CD4-positive, alpha-beta memory T cell (primary cell): ENCODE measurements at regions of chr19 and their contacts with region 1.

Region 1: DNA sequence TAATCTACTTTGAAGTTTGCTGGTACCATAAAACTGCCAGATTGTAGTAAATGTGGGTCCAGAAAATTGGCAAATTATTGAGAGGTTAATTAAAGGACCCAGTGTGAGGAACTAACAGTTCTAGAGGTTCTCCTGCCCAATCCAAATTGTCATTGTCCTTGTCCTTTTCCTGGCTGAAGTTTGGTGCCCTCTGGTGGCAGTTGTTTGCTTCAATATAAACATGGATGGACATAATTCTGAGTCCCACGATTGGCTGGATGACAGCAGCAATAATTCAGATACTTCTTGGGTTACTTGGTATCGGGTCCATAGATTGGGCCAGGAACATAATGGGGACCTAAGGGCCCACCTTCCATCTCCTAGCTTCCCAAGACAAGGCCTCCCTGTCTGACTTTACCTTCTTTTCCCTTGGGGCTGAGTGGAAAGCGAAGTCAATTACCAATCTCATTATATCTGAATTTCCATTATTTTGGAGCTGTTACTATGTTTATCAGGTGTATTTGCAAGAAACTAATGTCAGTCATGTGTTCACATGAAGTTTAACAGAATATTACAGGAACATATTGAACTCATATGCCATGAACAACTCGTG is 33.8 kb upstream of the GARRE1 start:
- DNase-seq: peak; percentile 39 to 57 (median 52)
- H3K4me3 ChIP-seq: no peak overlapping the region
- H3K4me3 Mint-ChIP-seq: peak overlapping the region in 1 of 8 donors; percentile 44
- H3K27ac ChIP-seq: no peak overlapping the region
- H3K27ac Mint-ChIP-seq: peak overlapping the region in 6 of 7 donors; percentile 0 to 83 (median 39)
- H3K4me1 ChIP-seq: peaks cover 42% of the 10 kb centered on the region
- H3K4me1 Mint-ChIP-seq: peaks cover 45 to 68% (median 53%) of the 10 kb centered on the region in 4 donors
- H3K27me3 ChIP-seq: no peaks in the 10 kb centered on the region
- H3K27me3 Mint-ChIP-seq: no peaks in the 10 kb centered on the region

Region 2: DNA sequence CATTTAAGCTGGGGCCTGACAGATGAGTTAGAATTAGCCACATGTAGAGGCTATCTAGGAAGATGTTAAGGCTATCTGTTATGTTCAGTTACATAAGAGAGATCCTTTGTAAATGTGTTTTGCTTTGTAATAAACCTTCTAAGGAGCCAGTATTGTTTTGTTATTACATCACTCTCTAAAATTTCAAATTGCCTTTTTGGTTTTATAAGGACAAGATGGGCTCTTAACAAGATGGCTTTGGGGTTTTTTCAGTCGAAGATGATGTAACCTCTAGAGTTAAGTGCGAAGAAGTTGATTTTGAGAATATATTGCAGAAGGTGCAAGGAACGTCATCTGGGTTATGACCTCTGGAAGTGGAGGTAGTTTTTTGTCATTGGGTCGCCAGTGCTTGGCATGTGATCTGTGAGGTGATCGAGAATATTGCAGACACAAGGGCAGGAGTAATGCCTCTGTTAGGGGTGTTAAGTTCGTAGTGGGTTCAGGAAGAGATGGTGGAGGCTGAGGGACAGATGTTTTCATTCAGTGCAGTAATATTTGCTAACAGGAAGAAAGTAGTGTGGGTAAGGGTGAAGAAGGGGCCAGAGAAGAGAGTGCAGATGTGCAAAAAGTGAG is 35.6 kb before region 1 on chr19:
- CTCF ChIA-PET with region 1: interaction called, 4 read pairs
- POLR2A ChIA-PET with region 1: no interaction called
- intact Hi-C with region 1: loop called (anchors 5 kb)
- DNase-seq: peak in 1 of 5 donors; percentile 37
- H3K4me3 ChIP-seq: no peak overlapping the region
- H3K4me3 Mint-ChIP-seq: peak overlapping the region in 7 of 8 donors; percentile 18 to 82 (median 62)
- H3K27ac ChIP-seq: no peak overlapping the region
- H3K27ac Mint-ChIP-seq: peak overlapping the region; percentile 7 to 89 (median 57)
- H3K4me1 ChIP-seq: peaks cover 96% of the 10 kb centered on the region
- H3K4me1 Mint-ChIP-seq: peaks cover 63 to 96% (median 81%) of the 10 kb centered on the region in 4 donors
- H3K27me3 ChIP-seq: no peaks in the 10 kb centered on the region
- H3K27me3 Mint-ChIP-seq: no peaks in the 10 kb centered on the region

Region 3: GRCh38 chr19:34209726-34210125 is 10.8 kb before region 1 on chr19:
- CTCF ChIA-PET with region 1: interaction called, 12 read pairs
- POLR2A ChIA-PET with region 1: no interaction called
- intact Hi-C with region 1: no loop called
- DNase-seq: no peak
- H3K4me3 ChIP-seq: no peak overlapping the region
- H3K4me3 Mint-ChIP-seq: no peak overlapping the region
- H3K27ac ChIP-seq: no peak overlapping the region
- H3K27ac Mint-ChIP-seq: peak overlapping the region in 3 of 7 donors; percentile 42 to 57 (median 48)
- H3K4me1 ChIP-seq: no peaks in the 10 kb centered on the region
- H3K4me1 Mint-ChIP-seq: peaks cover 3 to 8% (median 5%) of the 10 kb centered on the region in 4 donors
- H3K27me3 ChIP-seq: no peaks in the 10 kb centered on the region
- H3K27me3 Mint-ChIP-seq: no peaks in the 10 kb centered on the region

Region 4: GRCh38 chr19:34253699-34254551 is 33.4 kb after region 1 on chr19:
- CTCF ChIA-PET with region 1: interaction called, 3 read pairs
- POLR2A ChIA-PET with region 1: no interaction called
- intact Hi-C with region 1: loop called (anchors 5 kb)
- DNase-seq: peak in 3 of 5 donors; percentile 80 to 85 (median 82)
- H3K4me3 ChIP-seq: peak overlapping the region; percentile 67 to 75
- H3K4me3 Mint-ChIP-seq: peak overlapping the region; percentile 96 to 100 (median 98)
- H3K27ac ChIP-seq: peak overlapping the region; percentile 90
- H3K27ac Mint-ChIP-seq: peak overlapping the region; percentile 81 to 100 (median 99)
- H3K4me1 ChIP-seq: peaks cover 32% of the 10 kb centered on the region
- H3K4me1 Mint-ChIP-seq: peaks cover 17 to 42% (median 32%) of the 10 kb centered on the region in 4 donors
- H3K27me3 ChIP-seq: no peaks in the 10 kb centered on the region
- H3K27me3 Mint-ChIP-seq: no peaks in the 10 kb centered on the region

Region 5: GRCh38 chr19:34345947-34346351 is 125.4 kb after region 1 on chr19:
- CTCF ChIA-PET with region 1: interaction called, 17 read pairs
- POLR2A ChIA-PET with region 1: no interaction called
- intact Hi-C with region 1: loop called (anchors 5 kb)
- DNase-seq: peak; percentile 56 to 63 (median 58)
- H3K4me3 ChIP-seq: no peak overlapping the region
- H3K4me3 Mint-ChIP-seq: no peak overlapping the region
- H3K27ac ChIP-seq: no peak overlapping the region
- H3K27ac Mint-ChIP-seq: peak overlapping the region in 6 of 7 donors; percentile 49 to 92 (median 58)
- H3K4me1 ChIP-seq: peaks cover 18% of the 10 kb centered on the region
- H3K4me1 Mint-ChIP-seq: peaks cover 12 to 30% (median 20%) of the 10 kb centered on the region in 4 donors
- H3K27me3 ChIP-seq: no peaks in the 10 kb centered on the region
- H3K27me3 Mint-ChIP-seq: no peaks in the 10 kb centered on the region